ENCODE measurements at regions of chr5 and their contacts with region 1.

Region 1: DNA sequence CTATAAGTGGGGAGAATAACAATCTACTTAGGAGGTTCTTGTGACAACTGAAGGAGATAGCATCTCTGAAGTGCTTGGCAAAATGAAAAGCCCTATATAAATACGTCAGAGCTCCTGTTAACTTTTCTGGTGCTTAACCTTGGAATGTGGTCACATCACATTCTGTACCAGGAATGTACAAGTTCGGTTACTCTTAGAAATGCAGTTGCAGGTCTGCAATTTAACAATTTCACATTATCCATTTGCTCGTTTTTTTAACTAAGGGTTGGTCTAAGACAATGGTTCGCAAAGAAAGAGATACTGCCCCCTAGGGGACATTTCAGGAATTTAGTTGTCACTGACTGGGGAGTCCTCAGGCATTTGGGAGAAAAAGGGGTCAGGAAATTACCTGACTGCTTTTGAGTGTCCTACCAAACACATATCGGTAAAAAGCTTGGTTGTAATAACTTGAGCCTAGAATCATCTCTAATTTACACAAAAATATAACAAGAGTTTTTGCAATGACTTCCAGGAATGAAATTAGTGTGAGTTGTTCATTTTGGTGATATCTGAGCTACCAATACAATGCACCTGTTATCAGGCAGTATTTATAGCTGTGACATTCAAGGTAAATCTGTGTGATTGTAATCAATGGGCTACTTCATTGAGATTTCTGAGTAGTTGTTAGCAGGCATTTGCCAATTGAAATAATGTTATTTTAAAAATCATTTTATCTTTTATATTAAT is 5.4 kb upstream of the HBEGF start:
- DNase-seq: peak; percentile 92
- H3K4me3 Mint-ChIP-seq: no peak overlapping the region
- H3K27ac Mint-ChIP-seq: no peak overlapping the region
- H3K4me1 Mint-ChIP-seq: peaks cover 28% of the 10 kb centered on the region
- H3K27me3 Mint-ChIP-seq: no peaks in the 10 kb centered on the region
- CTCF ChIP-seq: peak; percentile 95

Region 2: GRCh38 chr5:140214831-140215230 is 136.9 kb before region 1 on chr5:
- CTCF ChIA-PET with region 1: interaction called, 19 read pairs
- POLR2A ChIA-PET with region 1: interaction called, 4 read pairs
- intact Hi-C with region 1: no loop called
- DNase-seq: peak; percentile 89
- H3K4me3 Mint-ChIP-seq: no peak overlapping the region
- H3K27ac Mint-ChIP-seq: no peak overlapping the region
- H3K4me1 Mint-ChIP-seq: peaks cover 17% of the 10 kb centered on the region
- H3K27me3 Mint-ChIP-seq: no peaks in the 10 kb centered on the region
- CTCF ChIP-seq: no peak

Region 3: DNA sequence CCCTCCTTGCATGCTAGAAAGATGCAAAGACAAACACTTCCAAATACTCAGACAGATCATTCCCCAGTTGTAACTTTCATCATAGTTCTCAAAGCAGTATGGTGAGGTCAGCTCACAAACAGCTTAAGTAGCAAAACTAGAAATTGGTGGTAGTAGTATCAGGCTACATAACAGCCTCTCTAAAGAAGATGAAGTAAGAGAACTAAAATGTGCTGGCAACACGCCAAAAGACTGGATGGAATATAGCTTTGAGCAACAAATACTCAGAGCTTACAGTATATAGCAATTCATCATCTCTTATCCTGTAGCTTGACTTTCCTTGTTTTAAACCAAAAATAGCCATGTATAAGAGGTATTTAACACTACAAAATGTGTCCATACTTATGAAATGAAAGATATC is 56.4 kb before region 1 on chr5:
- CTCF ChIA-PET with region 1: interaction called, 11 read pairs
- POLR2A ChIA-PET with region 1: interaction called, 26 read pairs
- intact Hi-C with region 1: no loop called
- DNase-seq: peak; percentile 94
- H3K4me3 Mint-ChIP-seq: no peak overlapping the region
- H3K27ac Mint-ChIP-seq: no peak overlapping the region
- H3K4me1 Mint-ChIP-seq: peaks cover 52% of the 10 kb centered on the region
- H3K27me3 Mint-ChIP-seq: no peaks in the 10 kb centered on the region
- CTCF ChIP-seq: no peak

Region 4: GRCh38 chr5:140321796-140322195 is 30.0 kb before region 1 on chr5:
- CTCF ChIA-PET with region 1: interaction called, 14 read pairs
- POLR2A ChIA-PET with region 1: interaction called, 6 read pairs
- intact Hi-C with region 1: no loop called
- DNase-seq: no peak
- H3K4me3 Mint-ChIP-seq: no peak overlapping the region
- H3K27ac Mint-ChIP-seq: no peak overlapping the region
- H3K4me1 Mint-ChIP-seq: peaks cover 14% of the 10 kb centered on the region
- H3K27me3 Mint-ChIP-seq: no peaks in the 10 kb centered on the region
- CTCF ChIP-seq: no peak

Region 5: DNA sequence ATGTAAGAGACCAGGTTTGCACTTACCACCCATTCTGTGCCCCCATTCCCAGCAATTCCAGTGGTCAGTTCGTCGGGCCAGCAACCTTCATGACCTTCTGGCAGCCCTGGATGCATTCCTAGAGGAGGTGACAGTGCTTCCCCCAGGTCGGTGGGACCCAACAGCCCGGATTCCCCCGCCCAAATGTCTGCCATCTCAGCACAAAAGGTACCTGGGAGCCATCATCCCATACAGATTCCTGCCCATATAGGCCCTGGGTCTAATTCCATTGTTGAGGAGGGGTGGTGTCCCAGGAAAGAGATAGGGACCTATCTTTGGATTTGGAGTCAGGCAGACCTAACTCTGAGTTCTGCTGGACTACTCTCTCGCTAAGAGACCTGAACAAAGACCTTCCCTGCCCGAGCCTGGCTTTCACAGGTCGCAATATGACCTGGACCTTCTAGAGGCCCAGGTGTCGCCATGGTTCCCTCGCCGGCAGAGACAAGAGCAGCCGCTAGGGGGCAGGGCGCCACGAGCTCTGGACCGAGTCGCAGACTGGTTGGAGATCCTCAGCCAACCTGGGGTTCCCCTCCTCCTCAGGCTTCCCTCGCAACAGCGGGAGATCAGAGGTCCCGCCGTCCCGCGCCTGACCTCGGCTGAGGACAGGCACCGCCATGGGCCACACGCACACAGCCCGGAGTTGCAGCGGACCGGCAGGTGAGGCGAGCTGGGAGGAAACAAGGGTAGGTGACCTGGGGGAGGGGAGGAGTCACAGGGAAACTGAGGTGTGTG is 11.3 kb after region 1 on chr5:
- CTCF ChIA-PET with region 1: interaction called, 58 read pairs
- POLR2A ChIA-PET with region 1: interaction called, 6 read pairs
- intact Hi-C with region 1: no loop called
- DNase-seq: peak; percentile 86
- H3K4me3 Mint-ChIP-seq: peak overlapping the region; percentile 72
- H3K27ac Mint-ChIP-seq: no peak overlapping the region
- H3K4me1 Mint-ChIP-seq: no peaks in the 10 kb centered on the region
- H3K27me3 Mint-ChIP-seq: no peaks in the 10 kb centered on the region
- CTCF ChIP-seq: peak; percentile 99

Region 6: DNA sequence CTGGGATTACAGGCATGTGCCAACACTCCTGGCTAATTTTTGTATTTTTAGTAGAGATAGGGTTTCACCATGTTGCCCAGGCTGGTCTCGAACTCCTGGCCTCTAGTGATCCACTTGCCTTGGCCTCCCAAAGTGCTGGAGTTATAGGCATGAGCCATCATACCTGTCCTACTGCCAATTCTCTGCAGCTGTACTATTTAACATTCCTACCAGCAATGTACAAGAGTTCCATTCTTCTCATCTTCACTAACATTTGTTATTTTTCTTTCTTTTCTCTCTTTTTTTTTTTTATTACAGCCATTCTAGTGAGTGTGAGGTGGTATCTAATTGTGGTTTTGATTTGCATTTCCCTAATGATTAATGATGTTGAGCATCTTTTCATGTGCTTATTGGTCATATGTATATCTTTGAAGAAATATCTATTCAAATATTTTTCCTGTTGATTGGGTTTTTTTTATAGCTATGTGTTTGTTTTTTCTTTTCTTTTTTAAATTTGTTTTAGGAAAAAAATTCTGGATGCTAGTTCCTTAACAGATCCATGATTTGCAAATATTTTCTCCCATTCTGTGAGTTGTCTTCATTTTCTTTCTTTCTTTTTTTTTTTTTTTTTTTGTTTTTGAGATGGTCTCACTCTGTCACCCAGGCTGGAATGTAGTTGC is 67.2 kb after region 1 on chr5:
- CTCF ChIA-PET with region 1: no interaction called
- POLR2A ChIA-PET with region 1: no interaction called
- intact Hi-C with region 1: no loop called
- DNase-seq: no peak
- H3K4me3 Mint-ChIP-seq: no peak overlapping the region
- H3K27ac Mint-ChIP-seq: no peak overlapping the region
- H3K4me1 Mint-ChIP-seq: peaks cover 37% of the 10 kb centered on the region
- H3K27me3 Mint-ChIP-seq: no peaks in the 10 kb centered on the region
- CTCF ChIP-seq: no peak